PC-3 (cell line): ENCODE measurements at regions of chr22 and their contacts with region 1.

Region 1: DNA sequence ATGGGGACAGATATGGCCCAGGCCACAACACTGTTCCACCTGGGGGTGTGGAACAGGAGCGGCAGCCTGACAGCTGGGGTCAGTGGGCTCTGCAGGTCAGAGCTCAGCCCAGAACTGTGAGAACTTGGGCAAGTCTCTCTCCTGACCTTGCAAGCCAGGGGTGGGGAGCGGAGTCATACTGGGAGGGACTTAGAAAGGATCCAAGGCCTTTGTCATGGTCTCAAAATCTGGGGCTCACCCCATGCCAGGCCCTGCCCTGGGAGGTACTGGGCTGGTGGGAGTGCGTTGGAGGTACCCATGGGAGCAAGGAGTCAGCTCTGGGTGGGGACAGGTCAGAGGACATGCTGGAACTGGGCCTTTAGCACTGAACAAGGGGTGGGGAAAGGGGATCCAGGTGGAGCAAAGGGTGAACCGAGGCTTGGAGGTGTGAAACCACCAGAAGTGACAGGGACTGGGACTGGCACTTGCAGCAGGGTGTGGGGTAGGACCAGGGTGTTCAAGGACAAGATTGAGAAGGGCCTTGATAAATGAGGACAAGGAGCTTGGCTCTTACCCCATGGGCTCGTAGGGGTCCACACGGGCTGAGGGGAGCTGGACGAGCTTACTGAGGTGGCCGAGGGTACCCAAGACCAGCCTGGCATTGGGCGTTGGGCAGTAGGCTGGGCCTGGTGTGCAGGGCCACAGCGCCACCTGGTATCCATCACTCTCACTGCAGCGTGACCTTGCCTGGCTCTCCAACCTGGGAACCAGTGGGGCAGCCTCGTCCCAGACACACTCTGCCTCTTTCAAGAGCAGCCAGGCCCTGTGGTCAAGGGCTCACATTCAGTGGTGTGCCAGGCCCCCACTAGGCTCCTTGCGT is 7.4 kb upstream of the PMM1 start:
- DNase-seq: peak; percentile 48
- ATAC-seq: peak; percentile 76
- H3K4me3 ChIP-seq: no peak overlapping the region
- H3K27ac ChIP-seq: no peak overlapping the region
- H3K4me1 ChIP-seq: 0 out of 2 replicates have a peak, but pooled peaks cover 3% of the 10 kb centered on the region
- H3K27me3 ChIP-seq: no peaks in the 10 kb centered on the region
- CTCF ChIP-seq: peak; percentile 69

Region 2: DNA sequence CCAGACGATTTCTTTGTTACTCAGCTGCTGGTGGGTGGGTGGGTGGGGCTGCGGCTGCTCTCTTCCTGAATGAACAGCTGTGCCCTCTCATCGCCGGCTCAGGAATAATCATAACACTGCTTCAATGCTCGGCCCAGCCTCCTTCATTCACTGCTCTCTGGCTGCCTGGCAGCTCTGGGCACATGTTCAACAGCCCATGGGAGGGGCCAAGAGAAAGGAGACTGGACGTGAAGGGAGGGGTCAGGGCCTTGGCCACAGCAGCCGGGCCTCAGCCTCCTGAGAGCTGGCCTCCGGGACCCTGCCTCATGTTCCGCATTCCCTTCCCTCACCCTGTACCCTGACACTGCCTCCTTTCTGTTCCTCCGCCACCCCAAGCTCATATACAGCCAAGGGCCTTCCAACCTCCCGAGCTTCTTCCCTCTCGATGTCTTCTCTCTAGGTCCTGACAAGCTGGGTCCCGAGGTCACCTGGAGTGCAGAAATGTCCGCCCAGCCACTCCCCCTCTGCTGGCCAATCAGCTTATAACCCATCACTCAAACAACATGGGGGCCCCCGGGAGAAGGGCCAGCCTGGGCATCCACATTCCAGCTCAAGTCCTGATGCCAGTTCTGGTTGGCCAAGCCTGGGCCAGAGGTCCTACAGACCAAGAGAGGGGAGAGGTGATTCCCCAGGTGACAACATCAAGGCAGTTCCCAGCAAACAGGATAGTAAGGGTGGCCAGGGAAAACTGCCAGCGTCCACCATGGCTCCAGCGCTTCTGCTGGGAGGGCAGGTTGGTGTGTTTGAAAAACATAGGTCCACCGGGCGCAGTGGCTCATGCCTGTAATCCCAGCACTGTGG is 39.4 kb before region 1 on chr22:
- CTCF ChIA-PET with region 1: no interaction called
- POLR2A ChIA-PET with region 1: interaction called, 6 read pairs
- intact Hi-C with region 1: loop called (anchors 2 kb)
- DNase-seq: no peak
- ATAC-seq: no peak
- H3K4me3 ChIP-seq: no peak overlapping the region
- H3K27ac ChIP-seq: no peak overlapping the region
- H3K4me1 ChIP-seq: 0 out of 2 replicates have a peak, but pooled peaks cover under 1% of the 10 kb centered on the region
- H3K27me3 ChIP-seq: no peaks in the 10 kb centered on the region
- CTCF ChIP-seq: no peak